ENCODE measurements at regions of chr1 and their contacts with region 1.

Region 1: DNA sequence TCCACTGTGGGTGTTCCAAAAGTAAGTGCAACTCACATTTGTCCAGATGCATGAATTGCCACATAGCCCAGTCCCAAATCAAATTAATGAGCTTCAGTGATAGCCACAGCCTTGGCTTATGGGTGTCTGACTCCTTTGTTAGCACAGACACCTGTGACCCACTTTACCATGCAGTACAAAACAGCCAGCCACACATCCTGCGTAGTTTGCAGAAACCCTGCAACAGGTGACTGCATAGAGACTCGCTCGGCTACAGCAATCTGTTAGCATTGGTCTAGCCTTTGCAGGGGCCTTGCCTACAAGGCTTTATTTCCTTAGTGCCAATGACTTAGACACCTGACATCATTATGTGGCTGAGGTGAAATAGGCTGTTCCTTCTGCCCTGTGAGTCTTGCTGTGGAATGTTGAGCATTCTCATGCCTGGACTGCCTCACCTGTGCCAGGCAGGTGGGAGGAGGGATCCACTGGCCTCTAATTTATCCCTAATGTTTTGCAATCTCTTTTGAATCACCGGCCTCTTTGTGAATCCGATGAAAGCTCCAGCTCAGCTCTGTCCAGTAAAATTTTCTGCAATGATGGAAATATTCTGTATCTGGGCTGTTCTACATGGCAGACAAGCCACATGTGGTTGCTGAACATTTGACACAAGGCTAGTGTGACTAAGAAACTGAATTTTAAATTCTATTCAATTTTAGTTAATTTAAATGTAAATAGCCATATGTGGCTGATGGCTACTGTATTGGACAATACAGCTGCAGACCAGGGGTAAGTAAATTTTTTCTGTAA is 135.3 kb downstream of the CSMD2 start:
- DNase-seq: no peak

Region 2: GRCh38 chr1:33273406-33273805 is 756.3 kb before region 1 on chr1:
- intact Hi-C with region 1: loop called in 1 of 2 experiments (anchors 5 kb)
- DNase-seq: no peak

Region 3: DNA sequence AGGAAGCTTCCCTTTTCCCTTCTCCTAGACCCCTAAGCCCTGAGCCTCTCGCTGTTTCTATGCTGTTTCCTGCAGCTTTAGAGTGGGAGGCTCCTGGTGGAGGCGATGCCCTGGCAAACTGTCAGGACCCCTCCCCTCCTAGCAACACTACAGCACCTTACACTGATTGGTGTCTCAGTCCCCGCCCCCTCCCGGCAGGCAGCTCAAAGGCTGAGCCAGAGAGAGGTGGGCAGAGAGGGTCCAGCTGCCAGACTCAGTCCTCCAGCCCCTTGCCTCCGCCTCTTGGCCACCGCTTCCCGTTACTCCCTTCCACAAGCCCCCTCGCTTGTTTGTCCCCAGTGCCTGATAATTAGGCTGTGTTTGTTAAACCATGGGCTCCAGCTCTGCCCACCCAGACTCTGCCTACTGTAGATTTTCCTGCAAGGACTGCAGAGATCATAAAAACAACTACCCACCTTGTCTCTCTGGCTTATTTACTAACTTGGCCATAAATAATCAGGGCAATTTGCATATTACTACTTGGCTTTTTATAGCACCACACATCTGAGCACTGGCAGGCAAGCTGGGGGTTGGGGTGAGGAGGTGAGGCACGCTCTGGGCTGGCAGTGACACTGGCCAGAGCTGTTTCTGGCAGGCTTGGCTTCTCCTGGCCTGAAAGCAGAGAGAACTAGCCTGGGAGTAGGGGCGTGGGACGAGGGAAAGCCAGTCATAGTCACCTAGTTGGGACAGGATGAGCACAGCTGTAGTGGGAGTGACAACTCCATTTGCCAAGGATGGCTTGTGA is 27.8 kb after region 1 on chr1:
- intact Hi-C with region 1: no loop called
- DNase-seq: no peak

Measured in posterior vena cava (tissue), 2 donors.